GM12878 (cell line): ENCODE measurements at regions of chr2 and their contacts with region 1.

Region 1: DNA sequence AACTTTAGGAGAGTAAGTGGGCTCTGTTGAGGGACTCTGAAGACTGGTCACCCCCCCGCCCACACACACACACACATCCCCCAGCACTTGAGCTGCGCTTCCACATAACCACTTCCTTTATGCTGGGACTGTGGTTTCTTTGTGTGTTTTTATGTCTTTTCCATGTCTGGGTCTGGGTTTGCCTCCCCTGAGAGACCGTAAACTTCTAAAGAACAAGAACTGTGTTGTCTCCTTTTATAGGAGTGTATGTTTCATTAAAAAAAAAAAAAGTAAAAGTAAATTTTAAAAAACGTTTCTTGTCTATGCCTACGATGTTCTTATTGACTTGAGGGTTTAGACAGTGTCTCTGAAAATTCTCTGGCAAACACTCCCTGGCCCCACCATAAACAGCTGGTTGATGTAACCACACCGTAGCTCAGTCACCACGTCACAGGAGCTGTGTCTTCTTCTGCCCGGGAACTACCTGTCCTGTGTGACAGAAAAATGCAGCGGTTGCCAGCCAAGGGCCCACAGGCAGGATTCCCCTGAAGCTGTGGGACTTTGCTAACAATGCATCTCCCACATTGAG is 68.0 kb downstream of the KLHL29 start:
- DNase-seq: peak; percentile 33
- ATAC-seq: peak; percentile 81
- H3K4me3 ChIP-seq: 0 out of 2 replicates have a peak overlapping the region, but pooled peaks have one; percentile 13
- H3K27ac ChIP-seq: peak overlapping the region; percentile 67
- H3K4me1 ChIP-seq: peaks cover 41% of the 10 kb centered on the region
- H3K27me3 ChIP-seq: no peaks in the 10 kb centered on the region
- CTCF ChIP-seq: no peak
- EP300 ChIP-seq: no peak; a peak in 1 of 4 replicates
- POLR2A ChIP-seq: no peak
- RAD21 ChIP-seq: no peak

Region 2: DNA sequence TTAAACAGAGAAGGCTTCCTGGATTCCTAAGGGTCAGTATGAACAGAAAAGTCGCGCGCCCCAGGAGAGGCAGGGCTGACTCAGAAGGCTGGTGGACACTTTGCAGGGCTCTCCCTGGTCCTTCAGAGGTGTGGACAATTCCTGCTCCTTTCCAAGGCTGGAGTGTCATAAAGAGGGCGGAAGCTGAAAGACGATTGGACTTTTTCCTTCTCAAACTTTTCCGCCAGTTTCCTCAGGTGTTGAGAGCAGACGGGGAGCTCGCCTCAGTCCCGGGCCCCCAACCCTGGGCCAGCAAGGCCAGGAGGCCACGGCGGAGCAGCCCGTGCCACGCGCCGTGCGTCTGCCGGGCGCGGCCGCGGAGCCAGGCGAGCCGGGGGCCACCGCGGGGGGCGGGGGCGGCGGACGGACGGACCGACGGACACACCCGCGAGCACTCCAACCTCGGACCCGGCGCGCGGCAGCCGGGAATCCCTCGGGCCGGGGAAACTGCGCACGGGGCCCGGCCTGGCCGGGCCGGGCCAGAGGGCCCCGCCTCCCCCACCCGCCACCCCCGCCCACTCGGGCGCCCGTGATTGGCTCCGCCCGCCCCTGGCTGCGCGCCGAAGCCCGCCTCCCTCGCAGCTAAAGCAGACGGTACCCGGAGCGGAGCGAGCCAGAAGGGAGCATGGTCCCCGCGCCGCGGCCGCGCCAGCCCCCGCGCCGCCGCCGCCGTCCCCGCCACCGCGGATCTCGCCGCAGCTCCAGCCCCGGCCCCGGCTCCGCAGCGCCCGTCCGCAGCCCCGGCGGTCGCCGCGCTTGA is 68.2 kb before region 1 on chr2 and contains the start of gene KLHL29:
- CTCF ChIA-PET with region 1: no interaction called
- POLR2A ChIA-PET with region 1: interaction called, 4 read pairs
- RAD21 ChIA-PET with region 1: no interaction called
- SMC1A ChIA-PET with region 1: interaction called, 5 read pairs
- in situ Hi-C with region 1: no loop called
- intact Hi-C with region 1: loop called (anchors 1 kb)
- DNase-seq: no peak
- ATAC-seq: peak; percentile 46
- H3K4me3 ChIP-seq: peak within 1 kb of the TSS; percentile 81
- H3K27ac ChIP-seq: no peak within 1 kb of the TSS
- H3K4me1 ChIP-seq: peaks cover 18% of the 10 kb centered on the region
- H3K27me3 ChIP-seq: no peaks in the 10 kb centered on the region
- CTCF ChIP-seq: no peak
- EP300 ChIP-seq: no peak
- POLR2A ChIP-seq: peak; percentile 91
- RAD21 ChIP-seq: no peak
- polyA plus RNA-seq, gene KLHL29: 1.4 to 2.2 TPM